PC-3 (cell line): ENCODE measurements at regions of chr1 and their contacts with region 1.

Region 1: GRCh38 chr1:201184307-201185122 is 6.1 kb upstream of the IGFN1 start:
- DNase-seq: peak; percentile 89
- ATAC-seq: peak; percentile 87
- H3K4me3 ChIP-seq: no peak overlapping the region
- H3K27ac ChIP-seq: no peak overlapping the region
- H3K4me1 ChIP-seq: peaks cover 11% of the 10 kb centered on the region; the same call in 1 of the 2 replicates
- H3K27me3 ChIP-seq: peaks cover 7% of the 10 kb centered on the region; the same call in 1 of the 2 replicates
- CTCF ChIP-seq: peak; percentile 93

Region 2: GRCh38 chr1:201114236-201115131 is 70.0 kb before region 1 on chr1:
- CTCF ChIA-PET with region 1: no interaction called
- POLR2A ChIA-PET with region 1: no interaction called
- intact Hi-C with region 1: loop called (anchors 2 kb)
- DNase-seq: peak; percentile 100
- ATAC-seq: peak; percentile 94
- H3K4me3 ChIP-seq: peak overlapping the region; percentile 73
- H3K27ac ChIP-seq: no peak overlapping the region
- H3K4me1 ChIP-seq: peaks cover 13% of the 10 kb centered on the region
- H3K27me3 ChIP-seq: no peaks in the 10 kb centered on the region
- CTCF ChIP-seq: peak; percentile 100

Region 3: GRCh38 chr1:201126832-201127754 is 57.4 kb before region 1 on chr1 and contains the start of gene ASCL5:
- CTCF ChIA-PET with region 1: no interaction called
- POLR2A ChIA-PET with region 1: no interaction called
- intact Hi-C with region 1: loop called (anchors 1 kb)
- DNase-seq: peak; percentile 100
- ATAC-seq: peak; percentile 90
- H3K4me3 ChIP-seq: peak within 1 kb of the TSS; percentile 59
- H3K27ac ChIP-seq: peak within 1 kb of the TSS; percentile 35
- H3K4me1 ChIP-seq: peaks cover 38% of the 10 kb centered on the region
- H3K27me3 ChIP-seq: no peaks in the 10 kb centered on the region
- CTCF ChIP-seq: peak; percentile 89
- total RNA-seq, gene ASCL5: 2.4 and 3.1 TPM in 2 replicates

Region 4: GRCh38 chr1:201149400-201149799 is 35.1 kb before region 1 on chr1:
- CTCF ChIA-PET with region 1: no interaction called
- POLR2A ChIA-PET with region 1: no interaction called
- intact Hi-C with region 1: loop called (anchors 1 kb)
- DNase-seq: peak; percentile 94
- ATAC-seq: peak; percentile 48
- H3K4me3 ChIP-seq: no peak overlapping the region
- H3K27ac ChIP-seq: no peak overlapping the region
- H3K4me1 ChIP-seq: peaks cover 15% of the 10 kb centered on the region
- H3K27me3 ChIP-seq: no peaks in the 10 kb centered on the region
- CTCF ChIP-seq: peak; percentile 99

Region 5: DNA sequence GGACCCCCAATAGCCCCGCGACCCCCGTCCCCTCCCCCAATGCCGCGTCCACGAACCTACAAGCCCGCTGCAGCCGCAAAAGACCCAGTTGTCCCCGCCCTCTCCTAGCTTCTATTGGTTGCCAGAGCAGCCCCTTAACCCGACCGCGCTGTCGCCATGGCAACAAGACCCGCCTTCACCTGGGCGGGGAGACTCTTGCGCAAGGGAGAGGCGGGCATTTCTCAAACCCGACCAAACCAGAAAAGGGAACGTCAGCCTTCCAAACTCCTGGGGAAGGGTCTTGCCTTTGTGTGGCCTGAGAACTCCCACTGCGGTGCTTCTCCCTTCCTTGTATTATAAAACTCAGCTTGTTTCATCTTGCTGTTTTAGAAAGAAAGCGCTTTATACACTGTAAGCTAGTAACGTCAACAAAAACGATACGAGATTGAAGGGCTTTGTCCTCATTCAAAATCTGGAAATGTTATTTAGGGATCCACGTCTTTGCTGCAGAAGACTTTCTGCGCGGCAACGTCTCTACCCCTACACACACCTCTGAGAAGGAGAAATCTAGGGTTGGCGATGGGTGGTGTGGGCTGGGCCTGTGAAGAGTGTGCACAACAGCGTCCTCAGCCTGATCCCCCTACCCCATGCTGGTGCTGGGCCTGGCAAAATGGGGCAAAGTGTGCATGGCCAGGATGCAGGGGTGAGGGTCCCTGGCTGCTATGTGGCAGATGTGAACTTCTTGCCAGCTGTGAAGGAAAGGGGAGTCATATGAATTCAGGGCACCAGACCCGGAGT is 29.9 kb before region 1 on chr1 and contains the start of gene TMEM9:
- CTCF ChIA-PET with region 1: no interaction called
- POLR2A ChIA-PET with region 1: no interaction called
- intact Hi-C with region 1: loop called (anchors 1 kb)
- DNase-seq: peak; percentile 100
- ATAC-seq: peak; percentile 95
- H3K4me3 ChIP-seq: peak within 1 kb of the TSS; percentile 72
- H3K27ac ChIP-seq: peak within 1 kb of the TSS; percentile 1
- H3K4me1 ChIP-seq: peaks cover 20% of the 10 kb centered on the region
- H3K27me3 ChIP-seq: no peaks in the 10 kb centered on the region
- CTCF ChIP-seq: no peak
- total RNA-seq, gene TMEM9: 428 and 435 TPM in 2 replicates

Region 6: DNA sequence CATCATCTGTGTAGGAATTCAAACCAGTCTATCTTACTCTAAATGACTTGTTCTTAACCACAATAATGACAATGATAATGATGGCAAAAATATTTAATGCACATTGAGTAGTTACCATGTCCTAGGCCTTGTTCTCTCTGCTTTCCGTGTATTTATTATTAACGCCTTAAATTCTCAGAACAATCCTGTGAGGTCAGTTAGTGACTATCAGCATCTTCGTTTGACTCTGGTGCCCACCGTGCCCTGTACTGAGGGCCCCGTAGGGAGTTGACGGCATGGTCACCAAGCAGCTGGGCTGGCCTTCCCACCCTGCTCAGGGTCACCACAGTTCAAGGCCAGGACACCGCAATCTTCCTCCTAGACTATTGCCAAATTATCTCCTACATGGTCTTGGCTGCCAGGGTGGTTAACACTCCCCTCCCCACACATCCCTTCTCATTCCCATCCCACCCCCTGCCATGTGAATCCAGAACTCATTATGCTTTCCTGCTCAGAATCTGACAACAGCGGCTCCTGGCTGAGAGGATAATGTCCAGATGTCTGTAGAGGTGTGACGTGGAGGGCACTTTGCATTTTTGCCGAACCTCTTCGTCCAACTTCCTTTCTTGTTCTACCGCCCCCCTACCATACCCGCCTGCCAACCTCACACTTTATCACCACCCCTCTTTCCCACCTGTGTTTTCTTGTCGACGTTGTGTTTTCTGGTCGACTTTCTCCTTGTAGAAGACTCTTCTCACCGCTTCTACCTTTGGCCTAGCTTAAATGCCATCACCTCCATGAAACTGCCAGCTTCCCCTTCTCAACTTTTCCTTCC is 39.5 kb after region 1 on chr1:
- CTCF ChIA-PET with region 1: no interaction called
- POLR2A ChIA-PET with region 1: no interaction called
- intact Hi-C with region 1: loop called (anchors 1 kb)
- DNase-seq: no peak
- ATAC-seq: no peak
- H3K4me3 ChIP-seq: no peak overlapping the region
- H3K27ac ChIP-seq: no peak overlapping the region
- H3K4me1 ChIP-seq: peaks cover 3% of the 10 kb centered on the region
- H3K27me3 ChIP-seq: no peaks in the 10 kb centered on the region
- CTCF ChIP-seq: no peak